ENCODE measurements at regions of chr3 and their contacts with region 1.

Region 1: GRCh38 chr3:127658234-127658633 is 14.5 kb upstream of the ABTB1 start:
- DNase-seq: peak; percentile 46
- ATAC-seq: peak; percentile 61
- H3K4me3 ChIP-seq: no peak overlapping the region
- H3K27ac ChIP-seq: no peak overlapping the region
- H3K4me1 ChIP-seq: peaks cover 10% of the 10 kb centered on the region
- H3K27me3 ChIP-seq: no peaks in the 10 kb centered on the region
- CTCF ChIP-seq: no peak
- POLR2A ChIP-seq: no peak
- RAD21 ChIP-seq: no peak

Region 2: GRCh38 chr3:126544596-126545281 is 1113.5 kb before region 1 on chr3:
- CTCF ChIA-PET with region 1: no interaction called
- POLR2A ChIA-PET with region 1: interaction called, 13 read pairs
- dilution Hi-C with region 1: no loop called
- in situ Hi-C with region 1: no loop called
- intact Hi-C with region 1: no loop called
- DNase-seq: no peak
- ATAC-seq: no peak
- H3K4me3 ChIP-seq: no peak overlapping the region
- H3K27ac ChIP-seq: no peak overlapping the region
- H3K4me1 ChIP-seq: peaks cover 5% of the 10 kb centered on the region
- H3K27me3 ChIP-seq: peaks cover 35% of the 10 kb centered on the region
- CTCF ChIP-seq: no peak
- POLR2A ChIP-seq: no peak
- RAD21 ChIP-seq: no peak

Region 3: DNA sequence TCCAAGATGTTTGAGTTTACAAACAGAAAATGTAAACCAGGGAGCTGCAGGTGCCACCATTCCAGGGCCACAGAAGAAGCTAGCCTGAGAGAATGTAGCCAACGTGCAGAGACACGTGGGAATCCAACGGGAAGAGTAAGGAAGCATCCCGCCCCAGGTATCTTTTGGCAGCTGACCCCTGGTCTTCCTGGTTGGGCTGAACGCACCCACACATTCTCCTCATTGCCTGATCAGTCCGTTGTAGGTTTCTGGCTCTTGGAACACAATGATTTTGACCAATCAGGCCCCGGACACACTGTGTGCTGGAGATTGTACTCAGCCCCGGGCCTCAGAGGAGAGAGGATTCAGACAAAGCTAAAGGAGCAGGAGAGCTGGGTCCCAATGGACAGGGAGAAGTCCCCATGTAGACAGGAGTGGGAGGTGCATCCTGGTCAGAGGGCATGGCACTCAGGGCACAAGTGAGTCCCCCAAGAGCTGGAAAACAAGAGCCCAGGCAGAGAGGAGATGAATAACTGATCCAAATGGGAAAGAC is 170.0 kb before region 1 on chr3:
- CTCF ChIA-PET with region 1: no interaction called
- POLR2A ChIA-PET with region 1: no interaction called
- dilution Hi-C with region 1: no loop called
- in situ Hi-C with region 1: no loop called
- intact Hi-C with region 1: no loop called
- DNase-seq: no peak
- ATAC-seq: no peak
- H3K4me3 ChIP-seq: no peak overlapping the region
- H3K27ac ChIP-seq: no peak overlapping the region
- H3K4me1 ChIP-seq: no peaks in the 10 kb centered on the region
- H3K27me3 ChIP-seq: peaks cover 8% of the 10 kb centered on the region
- CTCF ChIP-seq: no peak
- POLR2A ChIP-seq: no peak
- RAD21 ChIP-seq: no peak

Region 4: DNA sequence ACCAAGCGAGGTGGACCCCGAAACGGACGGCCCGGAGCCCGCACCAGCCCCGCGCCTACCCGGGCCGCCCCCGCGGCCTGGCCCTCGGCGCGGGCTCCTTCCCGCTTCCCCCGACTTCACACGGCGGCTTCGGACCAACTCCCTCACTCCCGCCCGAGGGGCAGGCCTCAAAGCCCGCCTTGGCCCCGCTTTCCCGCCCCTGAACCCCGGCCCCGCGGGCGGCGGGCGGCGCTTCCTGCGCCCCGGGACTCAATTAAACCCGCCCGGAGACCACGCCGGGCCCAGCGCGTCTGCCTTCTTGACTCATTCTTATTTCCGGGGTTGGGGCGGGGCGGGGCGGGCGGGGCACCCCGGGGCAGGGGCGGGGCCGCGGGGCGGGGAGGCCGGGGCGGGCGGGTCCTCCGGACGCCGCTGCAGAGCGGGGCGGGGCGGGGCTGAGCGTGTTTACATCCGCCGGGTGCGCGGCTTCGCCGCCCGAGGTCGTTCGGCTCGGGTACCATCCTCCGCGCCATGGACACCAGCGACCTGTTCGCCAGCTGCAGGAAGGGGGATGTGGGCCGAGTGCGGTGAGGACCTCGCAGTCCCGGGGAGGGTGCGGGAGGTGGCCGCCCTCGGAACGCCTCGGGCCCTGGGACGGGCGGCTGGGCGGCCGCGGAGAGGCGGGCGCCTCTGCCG is 14.4 kb after region 1 on chr3 and contains the start of gene ABTB1:
- CTCF ChIA-PET with region 1: interaction called, 3 read pairs
- POLR2A ChIA-PET with region 1: no interaction called
- dilution Hi-C with region 1: no loop called
- in situ Hi-C with region 1: no loop called
- intact Hi-C with region 1: loop called (anchors 1 kb)
- DNase-seq: peak; percentile 58
- ATAC-seq: peak; percentile 94
- H3K4me3 ChIP-seq: peak within 1 kb of the TSS; percentile 97
- H3K27ac ChIP-seq: peak within 1 kb of the TSS; percentile 91
- H3K4me1 ChIP-seq: peaks cover 10% of the 10 kb centered on the region
- H3K27me3 ChIP-seq: no peaks in the 10 kb centered on the region
- CTCF ChIP-seq: no peak
- POLR2A ChIP-seq: peak; percentile 95
- RAD21 ChIP-seq: no peak
- total RNA-seq, gene ABTB1: 3.2 and 3.3 TPM in 2 replicates